ENCODE measurements at regions of chr20 and their contacts with region 1.

Region 1: GRCh38 chr20:1663917-1664316 is 6.3 kb upstream of the SIRPG start:
- DNase-seq: peak in 2 of 14 experiments; percentile 34 to 47
- ATAC-seq: peak; percentile 25
- H3K4me3 ChIP-seq: no peak overlapping the region
- H3K4me3 Mint-ChIP-seq: peak overlapping the region; percentile 69
- H3K27ac ChIP-seq: peak overlapping the region; percentile 42 to 48
- H3K27ac Mint-ChIP-seq: peak overlapping the region; percentile 95
- H3K4me1 ChIP-seq: peaks cover 91% of the 10 kb centered on the region
- H3K4me1 Mint-ChIP-seq: peaks cover 98% of the 10 kb centered on the region
- H3K27me3 ChIP-seq: no peaks in the 10 kb centered on the region
- H3K27me3 Mint-ChIP-seq: no peaks in the 10 kb centered on the region
- CTCF ChIP-seq: no peak

Region 2: GRCh38 chr20:1651268-1652058 is 12.5 kb before region 1 on chr20:
- CTCF ChIA-PET with region 1: no interaction called
- POLR2A ChIA-PET with region 1: interaction called, 19 read pairs
- intact Hi-C with region 1: loop called in 1 of 2 experiments (anchors 2 kb)
- DNase-seq: peak in 2 of 14 experiments; percentile 35 to 39
- ATAC-seq: peak; percentile 33
- H3K4me3 ChIP-seq: peak overlapping the region; percentile 13
- H3K4me3 Mint-ChIP-seq: peak overlapping the region; percentile 64
- H3K27ac ChIP-seq: peak overlapping the region in 1 of 2 donors; percentile 8
- H3K27ac Mint-ChIP-seq: peak overlapping the region; percentile 53
- H3K4me1 ChIP-seq: peaks cover 55% of the 10 kb centered on the region
- H3K4me1 Mint-ChIP-seq: peaks cover 87% of the 10 kb centered on the region
- H3K27me3 ChIP-seq: no peaks in the 10 kb centered on the region
- H3K27me3 Mint-ChIP-seq: no peaks in the 10 kb centered on the region
- CTCF ChIP-seq: no peak

Measured in CD4-positive, alpha-beta T cell (primary cell).